Psoas muscle (tissue), 8 donors: ENCODE measurements at regions of chr10 and their contacts with region 1.

Region 1: DNA sequence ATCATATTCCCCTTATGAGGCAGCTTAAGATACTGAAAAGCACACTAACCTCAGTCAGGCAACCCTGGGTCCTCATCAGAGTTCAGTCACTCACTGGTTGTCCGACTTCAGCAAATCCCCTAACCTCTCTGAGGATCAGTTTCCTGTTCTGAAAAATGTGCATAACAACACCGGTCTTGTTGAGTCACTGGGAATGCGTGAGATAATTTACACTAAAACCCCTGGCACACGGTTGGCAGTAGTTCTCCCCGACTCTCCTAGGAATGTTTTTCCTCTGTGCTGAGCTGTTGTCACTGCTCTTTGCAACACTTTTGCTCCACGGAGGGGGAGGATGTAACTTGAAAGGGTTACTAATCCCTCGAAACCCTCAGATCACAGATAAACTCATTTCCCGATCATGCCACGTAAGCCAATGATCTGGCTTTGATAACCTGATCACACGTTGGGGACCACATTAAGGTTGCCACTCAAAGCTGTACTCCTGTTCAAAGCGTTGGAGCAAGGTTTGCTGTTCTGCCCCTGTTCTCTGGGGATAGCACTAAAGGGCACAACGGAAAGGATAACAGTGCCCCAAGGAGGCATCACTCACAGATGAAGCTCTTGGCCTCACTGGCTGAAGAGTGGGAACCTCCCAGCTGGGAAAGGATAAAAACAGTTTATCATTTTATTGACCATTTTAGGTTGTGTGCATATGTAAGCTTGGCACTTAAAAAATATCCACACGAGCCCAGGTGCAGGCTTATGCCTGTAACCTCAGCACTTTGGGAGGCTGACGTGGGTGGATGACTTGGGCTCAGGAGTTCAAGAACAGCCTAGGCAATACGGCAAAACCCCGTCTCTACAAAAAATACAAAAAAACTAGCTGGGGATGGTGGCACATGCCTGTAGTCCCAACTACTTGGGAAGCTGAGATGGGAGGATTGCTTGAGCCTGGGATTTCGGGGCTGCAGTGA is 5.0 kb upstream of the RBM17 start:
- DNase-seq: no peak
- ATAC-seq: no peak
- H3K4me3 ChIP-seq: no peak overlapping the region
- H3K27ac ChIP-seq: no peak overlapping the region
- H3K4me1 ChIP-seq: peaks cover 16% of the 10 kb centered on the region
- H3K27me3 ChIP-seq: peaks cover 0 to 16% (median 0%) of the 10 kb centered on the region in 3 donors
- CTCF ChIP-seq: no peak

Region 2: GRCh38 chr10:6014241-6014761 is 69.5 kb before region 1 on chr10:
- intact Hi-C with region 1: loop called in 1 of 2 experiments (anchors 5 kb)
- DNase-seq: peak in 1 of 2 donors; percentile 35
- ATAC-seq: peak in 3 of 4 donors; percentile 59 to 79 (median 63)
- H3K4me3 ChIP-seq: no peak overlapping the region
- H3K27ac ChIP-seq: no peak overlapping the region
- H3K4me1 ChIP-seq: no peaks in the 10 kb centered on the region
- H3K27me3 ChIP-seq: peaks cover 0 to 5% (median 0%) of the 10 kb centered on the region in 3 donors
- CTCF ChIP-seq: peak; percentile 77

Region 3: DNA sequence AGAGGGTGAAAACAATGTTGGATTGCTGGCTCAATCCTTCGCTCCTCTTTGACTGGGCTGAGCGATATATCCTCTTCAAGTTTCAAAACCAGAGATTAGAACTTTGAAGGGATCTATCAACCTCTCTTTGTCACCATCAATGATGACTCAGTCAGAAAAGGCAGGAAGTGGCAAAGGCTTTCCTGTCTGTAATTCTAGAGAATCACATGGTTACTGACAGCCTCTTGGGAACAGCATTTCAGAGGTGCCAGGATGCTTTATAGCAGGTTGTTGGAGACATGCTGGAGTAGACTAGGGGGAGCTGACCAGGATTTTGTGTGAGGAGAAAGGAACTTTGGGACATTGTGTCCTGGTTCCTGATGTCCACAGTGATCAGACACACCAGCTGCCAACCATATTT is 415.0 kb after region 1 on chr10:
- intact Hi-C with region 1: no loop called
- DNase-seq: no peak
- ATAC-seq: peak; percentile 74 to 90 (median 79)
- H3K4me3 ChIP-seq: no peak overlapping the region
- H3K27ac ChIP-seq: peak overlapping the region; percentile 93
- H3K4me1 ChIP-seq: peaks cover 39% of the 10 kb centered on the region
- H3K27me3 ChIP-seq: no peaks in the 10 kb centered on the region
- CTCF ChIP-seq: no peak